B cell (primary cell): ENCODE measurements at regions of chr18 and their contacts with region 1.

Region 1: GRCh38 chr18:21085579-21086166 is 25.9 kb downstream of the ROCK1 start:
- DNase-seq: no peak
- ATAC-seq: no peak
- H3K4me3 ChIP-seq: no peak overlapping the region
- H3K4me3 Mint-ChIP-seq: peak overlapping the region; percentile 26
- H3K27ac ChIP-seq: no peak overlapping the region
- H3K27ac Mint-ChIP-seq: no peak overlapping the region
- H3K4me1 ChIP-seq: peaks cover 3 to 19% of the 10 kb centered on the region in 2 donors
- H3K4me1 Mint-ChIP-seq: peaks cover 70% of the 10 kb centered on the region
- H3K27me3 ChIP-seq: no peaks in the 10 kb centered on the region
- H3K27me3 Mint-ChIP-seq: no peaks in the 10 kb centered on the region
- CTCF ChIP-seq: no peak

Region 2: GRCh38 chr18:21099442-21099841 is 13.8 kb after region 1 on chr18:
- CTCF ChIA-PET with region 1: no interaction called
- POLR2A ChIA-PET with region 1: no interaction called
- intact Hi-C with region 1: loop called (anchors 2 kb)
- DNase-seq: peak; percentile 66
- ATAC-seq: peak; percentile 85
- H3K4me3 ChIP-seq: peak overlapping the region in 1 of 5 experiments; percentile 27
- H3K4me3 Mint-ChIP-seq: peak overlapping the region; percentile 67
- H3K27ac ChIP-seq: peak overlapping the region; percentile 52 to 75
- H3K27ac Mint-ChIP-seq: peak overlapping the region; percentile 79
- H3K4me1 ChIP-seq: peaks cover 20 to 63% of the 10 kb centered on the region in 2 donors
- H3K4me1 Mint-ChIP-seq: peaks cover 72% of the 10 kb centered on the region
- H3K27me3 ChIP-seq: no peaks in the 10 kb centered on the region
- H3K27me3 Mint-ChIP-seq: no peaks in the 10 kb centered on the region
- CTCF ChIP-seq: no peak

Region 3: DNA sequence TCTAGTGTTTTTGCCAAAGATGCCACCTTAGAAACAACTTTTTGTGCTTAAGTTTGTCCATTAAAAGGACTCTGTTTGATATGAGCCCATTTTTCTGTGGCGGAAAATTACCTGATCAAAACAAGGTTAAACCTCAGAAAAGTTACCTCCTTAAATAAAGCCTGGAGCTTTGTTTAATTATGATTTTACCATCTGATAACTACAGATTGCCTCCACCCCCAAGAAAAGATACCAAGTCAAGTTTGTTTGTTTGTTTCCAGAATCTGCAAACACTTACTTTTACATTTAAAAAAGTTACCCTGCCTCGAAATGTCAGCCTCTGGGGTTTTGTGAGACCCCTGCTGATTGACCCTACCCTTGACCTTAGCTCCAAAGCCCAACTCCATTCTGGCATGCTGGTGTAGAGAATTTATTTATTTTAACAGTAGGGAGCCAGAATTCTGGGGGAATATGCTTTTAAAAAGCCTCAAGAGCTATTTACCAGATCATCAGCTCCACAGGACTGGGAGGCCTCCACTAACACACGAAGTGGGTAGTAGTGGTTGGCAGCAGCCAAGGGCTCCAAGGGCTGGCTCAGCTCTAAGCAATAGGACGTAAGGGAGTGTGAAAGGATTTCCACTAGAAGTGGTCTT is 133.1 kb after region 1 on chr18:
- CTCF ChIA-PET with region 1: no interaction called
- POLR2A ChIA-PET with region 1: no interaction called
- intact Hi-C with region 1: no loop called
- DNase-seq: no peak
- ATAC-seq: no peak
- H3K4me3 ChIP-seq: no peak overlapping the region
- H3K4me3 Mint-ChIP-seq: no peak overlapping the region
- H3K27ac ChIP-seq: no peak overlapping the region
- H3K27ac Mint-ChIP-seq: no peak overlapping the region
- H3K4me1 ChIP-seq: no peaks in the 10 kb centered on the region
- H3K4me1 Mint-ChIP-seq: no peaks in the 10 kb centered on the region
- H3K27me3 ChIP-seq: no peaks in the 10 kb centered on the region
- H3K27me3 Mint-ChIP-seq: no peaks in the 10 kb centered on the region
- CTCF ChIP-seq: no peak